Heart right ventricle (tissue), 16 donors: ENCODE measurements at regions of chr1 and their contacts with region 1.

Region 1: DNA sequence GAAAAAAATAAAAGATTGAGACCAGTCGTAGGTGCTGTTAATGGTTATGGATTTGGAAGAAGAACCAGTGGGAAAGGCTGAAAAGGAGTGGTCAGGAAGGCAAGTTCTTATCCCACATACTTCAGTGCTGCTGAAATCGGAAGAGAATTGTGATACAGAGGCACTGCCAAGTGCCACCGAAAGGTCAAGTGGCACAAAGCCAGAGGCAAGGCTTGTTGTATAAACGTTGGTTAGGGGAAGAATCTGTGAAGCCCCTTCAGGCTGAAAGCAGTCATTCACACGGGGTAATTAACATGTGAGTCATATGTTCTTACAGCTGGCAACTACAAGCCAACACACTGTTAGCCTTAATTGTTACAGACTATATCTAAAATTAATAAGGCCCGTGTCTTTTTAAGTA is 48.8 kb downstream of the ZBTB40 start:
- DNase-seq: peak; percentile 21 to 27
- ATAC-seq: peak in 5 of 8 donors; percentile 49 to 76 (median 64)
- H3K4me3 ChIP-seq: no peak overlapping the region
- H3K27ac ChIP-seq: peak overlapping the region in 5 of 10 donors; percentile 4 to 51 (median 9)
- H3K4me1 ChIP-seq: peaks cover 4 to 49% (median 24%) of the 10 kb centered on the region in 9 donors
- H3K27me3 ChIP-seq: no peaks in the 10 kb centered on the region
- CTCF ChIP-seq: no peak

Region 2: DNA sequence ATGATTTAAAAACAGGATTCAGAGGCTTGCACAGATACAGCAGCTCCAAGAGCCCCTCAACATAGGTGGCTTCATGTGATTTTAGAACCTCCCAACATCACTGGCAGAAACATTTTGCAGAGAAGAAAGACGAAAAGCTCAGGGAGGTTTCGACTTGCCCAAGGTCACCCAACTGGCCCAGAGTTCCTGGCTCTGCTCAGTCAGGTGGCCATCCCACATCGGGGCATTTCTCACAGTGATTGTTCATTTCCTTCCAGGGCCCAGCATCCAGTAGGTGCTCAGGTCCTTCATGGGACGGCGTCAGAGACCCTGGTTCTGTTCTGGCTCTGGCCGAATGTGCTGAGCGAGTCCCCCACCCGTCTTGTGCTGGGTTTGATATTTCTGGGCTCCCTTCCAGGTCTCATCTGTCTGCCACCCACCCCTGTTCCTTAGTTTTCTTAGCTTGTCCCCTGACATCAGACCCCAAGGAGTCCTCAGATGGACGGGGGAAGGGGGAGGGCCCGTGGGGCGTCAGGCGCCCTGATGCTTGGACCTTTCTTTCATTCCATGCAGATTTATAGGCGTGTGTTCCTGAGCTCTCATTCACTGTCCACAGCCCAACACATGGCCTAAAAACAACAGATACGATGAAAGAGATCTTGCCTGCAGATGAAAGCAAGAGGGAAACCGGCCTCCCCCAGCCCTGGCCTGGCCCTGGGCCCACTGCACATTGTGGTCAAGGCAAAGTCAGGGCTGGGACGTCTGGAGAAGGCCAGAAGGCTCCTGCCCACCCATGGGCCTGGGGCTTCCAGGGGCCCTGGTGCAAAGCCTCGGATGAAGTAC is 171.9 kb before region 1 on chr1:
- intact Hi-C with region 1: no loop called
- DNase-seq: no peak
- ATAC-seq: no peak
- H3K4me3 ChIP-seq: no peak overlapping the region
- H3K27ac ChIP-seq: no peak overlapping the region
- H3K4me1 ChIP-seq: no peaks in the 10 kb centered on the region
- H3K27me3 ChIP-seq: peaks cover 0 to 38% (median 29%) of the 10 kb centered on the region in 7 donors
- CTCF ChIP-seq: no peak

Region 3: DNA sequence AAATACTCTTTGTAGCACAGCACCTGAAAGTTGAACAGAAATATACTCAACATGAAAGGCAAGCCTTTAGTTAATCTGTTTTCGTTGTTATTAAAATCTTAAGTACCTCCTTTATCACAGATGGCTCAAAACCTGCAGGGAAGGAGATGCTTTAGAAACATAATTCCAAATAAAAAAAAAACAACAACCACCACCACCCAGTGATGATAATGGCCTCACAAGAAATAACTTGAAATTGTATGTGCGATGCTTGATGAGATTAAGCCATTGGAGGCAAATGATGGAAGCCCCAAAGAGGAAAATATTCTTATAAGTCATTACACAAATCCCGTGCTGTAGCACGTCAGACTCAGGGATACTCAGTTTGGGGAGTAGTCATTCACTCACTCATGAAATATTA is 73.7 kb before region 1 on chr1:
- intact Hi-C with region 1: loop called in 1 of 10 experiments (anchors 5 kb)
- DNase-seq: no peak
- ATAC-seq: no peak
- H3K4me3 ChIP-seq: no peak overlapping the region
- H3K27ac ChIP-seq: no peak overlapping the region
- H3K4me1 ChIP-seq: no peaks in the 10 kb centered on the region
- H3K27me3 ChIP-seq: peaks cover 0 to 6% (median 0%) of the 10 kb centered on the region in 7 donors
- CTCF ChIP-seq: no peak

Region 4: GRCh38 chr1:22437573-22437972 is 62.9 kb before region 1 on chr1:
- intact Hi-C with region 1: no loop called
- DNase-seq: no peak
- ATAC-seq: no peak
- H3K4me3 ChIP-seq: no peak overlapping the region
- H3K27ac ChIP-seq: no peak overlapping the region
- H3K4me1 ChIP-seq: peaks cover 0 to 6% (median 0%) of the 10 kb centered on the region in 9 donors
- H3K27me3 ChIP-seq: peaks cover 0 to 7% (median 0%) of the 10 kb centered on the region in 7 donors
- CTCF ChIP-seq: no peak